A673 (cell line): ENCODE measurements at regions of chr2 and their contacts with region 1.

Region 1: DNA sequence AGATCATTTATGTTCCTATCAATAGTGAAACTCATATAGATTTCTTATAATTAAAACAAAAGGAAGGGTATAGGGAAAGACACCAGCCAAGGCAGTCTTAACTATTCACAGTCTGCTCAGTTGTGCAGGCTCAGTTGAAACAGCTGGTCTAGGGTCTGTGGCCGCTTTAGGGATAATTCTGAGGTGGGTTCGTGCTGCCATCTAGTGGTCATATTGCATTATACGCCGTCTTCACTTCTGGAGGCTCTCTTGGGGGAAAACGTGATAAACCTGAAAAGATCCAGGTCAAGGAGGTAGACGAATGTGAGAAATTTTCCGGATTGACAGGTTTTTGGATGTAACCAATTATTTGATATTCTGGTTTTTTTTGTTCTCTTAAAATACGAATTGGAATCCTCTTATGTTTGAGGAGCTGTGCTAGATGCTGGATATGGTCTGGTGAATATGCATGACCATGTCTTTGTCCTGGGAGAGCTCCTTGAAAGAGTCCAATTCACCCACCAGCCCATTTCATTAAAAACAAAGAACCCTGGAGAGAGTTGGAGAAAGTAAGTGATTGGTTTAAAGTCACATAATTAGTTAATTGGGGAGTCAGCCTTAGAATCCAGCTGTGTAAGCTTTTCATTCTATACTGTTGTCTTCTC is 492.4 kb downstream of the PLCL1 start:
- DNase-seq: peak; percentile 76
- H3K4me3 ChIP-seq: no peak overlapping the region
- H3K27ac ChIP-seq: no peak overlapping the region
- H3K4me1 ChIP-seq: no peaks in the 10 kb centered on the region
- H3K27me3 ChIP-seq: peaks cover 4% of the 10 kb centered on the region
- CTCF ChIP-seq: peak; percentile 74

Region 2: DNA sequence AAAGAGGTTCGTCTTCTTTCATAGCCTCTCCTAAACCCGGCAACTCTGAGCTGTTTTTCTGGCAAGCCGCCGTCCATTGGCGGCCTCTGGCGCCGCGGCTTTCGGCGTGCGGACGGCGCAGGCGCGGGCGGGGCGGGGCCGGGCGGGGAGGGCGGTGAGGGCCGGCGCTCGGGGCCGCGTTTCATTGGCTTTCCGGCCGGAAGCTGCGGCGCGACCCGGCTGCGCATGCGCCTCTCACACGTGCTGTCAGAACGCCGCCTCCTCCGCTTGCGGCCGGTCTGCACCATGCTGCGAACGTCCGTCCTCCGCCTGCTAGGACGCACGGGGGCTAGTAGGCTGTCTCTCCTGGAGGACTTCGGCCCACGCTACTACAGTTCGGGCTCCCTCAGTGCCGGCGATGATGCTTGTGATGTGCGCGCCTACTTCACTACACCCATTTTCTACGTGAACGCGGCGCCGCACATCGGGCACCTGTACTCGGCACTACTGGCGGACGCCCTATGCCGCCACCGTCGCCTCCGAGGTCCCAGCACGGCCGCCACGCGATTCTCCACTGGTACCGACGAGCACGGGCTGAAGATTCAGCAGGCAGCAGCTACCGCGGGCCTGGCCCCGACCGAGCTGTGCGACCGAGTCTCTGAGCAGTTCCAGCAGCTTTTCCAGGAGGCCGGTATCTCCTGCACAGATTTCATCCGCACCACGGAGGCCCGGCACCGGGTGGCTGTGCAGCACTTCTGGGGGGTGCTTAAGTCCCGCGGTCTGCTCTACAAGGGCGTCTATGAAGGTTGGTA is 591.5 kb before region 1 on chr2 and contains the start of gene MARS2:
- CTCF ChIA-PET with region 1: no interaction called
- POLR2A ChIA-PET with region 1: no interaction called
- intact Hi-C with region 1: loop called (anchors 5 kb)
- DNase-seq: peak; percentile 95
- H3K4me3 ChIP-seq: peak within 1 kb of the TSS; percentile 95
- H3K27ac ChIP-seq: peak within 1 kb of the TSS; percentile 87
- H3K4me1 ChIP-seq: peaks cover 7% of the 10 kb centered on the region
- H3K27me3 ChIP-seq: no peaks in the 10 kb centered on the region
- CTCF ChIP-seq: no peak
- total RNA-seq, gene MARS2: 13.2 and 14.6 TPM in 2 replicates

Region 3: DNA sequence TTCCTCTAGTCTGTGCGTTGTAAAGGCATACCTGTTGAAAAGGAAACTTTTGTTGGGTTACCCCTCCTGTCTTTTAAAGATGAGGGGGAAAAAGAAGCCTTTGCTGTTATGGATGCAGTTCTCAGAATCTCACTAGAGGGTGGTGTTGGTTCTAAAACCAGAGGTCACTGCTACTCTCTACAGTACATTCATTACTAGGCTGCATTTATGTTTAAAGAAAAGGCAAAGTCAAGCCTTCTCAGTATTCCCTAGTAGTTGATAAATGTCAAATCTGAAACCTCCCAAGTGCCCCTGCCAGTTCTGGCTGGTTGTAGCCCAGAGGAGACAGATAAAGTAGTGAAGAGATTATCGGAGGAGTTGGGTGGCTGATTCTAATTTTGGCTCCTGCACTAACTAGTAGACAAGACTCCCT is 493.7 kb before region 1 on chr2:
- CTCF ChIA-PET with region 1: interaction called, 4 read pairs
- POLR2A ChIA-PET with region 1: no interaction called
- intact Hi-C with region 1: loop called (anchors 1 kb)
- DNase-seq: peak; percentile 61
- H3K4me3 ChIP-seq: no peak overlapping the region
- H3K27ac ChIP-seq: no peak overlapping the region
- H3K4me1 ChIP-seq: peaks cover 10% of the 10 kb centered on the region
- H3K27me3 ChIP-seq: peaks cover 34% of the 10 kb centered on the region
- CTCF ChIP-seq: peak; percentile 67

Region 4: DNA sequence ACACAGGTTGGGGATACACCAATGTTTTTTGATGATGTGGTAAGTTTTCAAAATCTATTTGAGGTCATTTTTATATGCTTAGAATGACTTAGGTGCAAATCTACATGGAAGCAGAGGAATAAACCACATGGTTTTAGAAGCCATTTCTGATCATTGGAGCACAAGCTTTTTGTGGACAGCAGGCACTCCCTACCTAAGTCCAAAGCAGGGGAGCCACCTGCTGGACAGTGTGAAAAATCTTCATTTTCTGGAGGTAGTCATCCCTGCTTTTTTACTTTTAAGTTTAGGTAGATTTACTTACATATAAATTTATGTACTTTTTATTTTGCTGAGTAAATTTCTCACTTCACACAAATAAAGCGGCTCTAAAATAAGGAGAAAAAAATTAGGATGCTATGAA is 169.2 kb before region 1 on chr2:
- CTCF ChIA-PET with region 1: no interaction called
- POLR2A ChIA-PET with region 1: no interaction called
- intact Hi-C with region 1: loop called (anchors 5 kb)
- DNase-seq: peak; percentile 64
- H3K4me3 ChIP-seq: no peak overlapping the region
- H3K27ac ChIP-seq: no peak overlapping the region
- H3K4me1 ChIP-seq: no peaks in the 10 kb centered on the region
- H3K27me3 ChIP-seq: peaks cover 13% of the 10 kb centered on the region
- CTCF ChIP-seq: peak; percentile 73

Region 5: GRCh38 chr2:198144660-198145059 is 152.1 kb before region 1 on chr2:
- CTCF ChIA-PET with region 1: no interaction called
- POLR2A ChIA-PET with region 1: no interaction called
- intact Hi-C with region 1: loop called (anchors 5 kb)
- DNase-seq: no peak
- H3K4me3 ChIP-seq: no peak overlapping the region
- H3K27ac ChIP-seq: no peak overlapping the region
- H3K4me1 ChIP-seq: no peaks in the 10 kb centered on the region
- H3K27me3 ChIP-seq: no peaks in the 10 kb centered on the region
- CTCF ChIP-seq: no peak